ENCODE measurements at regions of chr10 and their contacts with region 1.

Region 1: GRCh38 chr10:102132563-102133372 is at the start of gene PPRC1:
- DNase-seq: peak; percentile 93 to 99 (median 95)
- ATAC-seq: peak; percentile 94
- H3K4me3 ChIP-seq: peak within 1 kb of the TSS; percentile 98
- H3K4me3 Mint-ChIP-seq: peak within 1 kb of the TSS; percentile 98
- H3K27ac ChIP-seq: peak within 1 kb of the TSS; percentile 81 to 82
- H3K27ac Mint-ChIP-seq: peak within 1 kb of the TSS; percentile 87
- H3K4me1 ChIP-seq: peaks cover 40% of the 10 kb centered on the region
- H3K4me1 Mint-ChIP-seq: peaks cover 39% of the 10 kb centered on the region
- H3K27me3 ChIP-seq: no peaks in the 10 kb centered on the region
- H3K27me3 Mint-ChIP-seq: no peaks in the 10 kb centered on the region
- CTCF ChIP-seq: peak; percentile 96
- total RNA-seq, gene PPRC1: 22.0 to 22.9 TPM

Region 2: GRCh38 chr10:101903827-101904550 is 228.8 kb before region 1 on chr10:
- CTCF ChIA-PET with region 1: no interaction called
- POLR2A ChIA-PET with region 1: no interaction called
- intact Hi-C with region 1: no loop called
- DNase-seq: peak in 2 of 14 experiments; percentile 15 to 23
- ATAC-seq: no peak
- H3K4me3 ChIP-seq: no peak overlapping the region
- H3K4me3 Mint-ChIP-seq: no peak overlapping the region
- H3K27ac ChIP-seq: no peak overlapping the region
- H3K27ac Mint-ChIP-seq: peak overlapping the region; percentile 10
- H3K4me1 ChIP-seq: no peaks in the 10 kb centered on the region
- H3K4me1 Mint-ChIP-seq: peaks cover 19% of the 10 kb centered on the region
- H3K27me3 ChIP-seq: no peaks in the 10 kb centered on the region
- H3K27me3 Mint-ChIP-seq: no peaks in the 10 kb centered on the region
- CTCF ChIP-seq: no peak

Region 3: DNA sequence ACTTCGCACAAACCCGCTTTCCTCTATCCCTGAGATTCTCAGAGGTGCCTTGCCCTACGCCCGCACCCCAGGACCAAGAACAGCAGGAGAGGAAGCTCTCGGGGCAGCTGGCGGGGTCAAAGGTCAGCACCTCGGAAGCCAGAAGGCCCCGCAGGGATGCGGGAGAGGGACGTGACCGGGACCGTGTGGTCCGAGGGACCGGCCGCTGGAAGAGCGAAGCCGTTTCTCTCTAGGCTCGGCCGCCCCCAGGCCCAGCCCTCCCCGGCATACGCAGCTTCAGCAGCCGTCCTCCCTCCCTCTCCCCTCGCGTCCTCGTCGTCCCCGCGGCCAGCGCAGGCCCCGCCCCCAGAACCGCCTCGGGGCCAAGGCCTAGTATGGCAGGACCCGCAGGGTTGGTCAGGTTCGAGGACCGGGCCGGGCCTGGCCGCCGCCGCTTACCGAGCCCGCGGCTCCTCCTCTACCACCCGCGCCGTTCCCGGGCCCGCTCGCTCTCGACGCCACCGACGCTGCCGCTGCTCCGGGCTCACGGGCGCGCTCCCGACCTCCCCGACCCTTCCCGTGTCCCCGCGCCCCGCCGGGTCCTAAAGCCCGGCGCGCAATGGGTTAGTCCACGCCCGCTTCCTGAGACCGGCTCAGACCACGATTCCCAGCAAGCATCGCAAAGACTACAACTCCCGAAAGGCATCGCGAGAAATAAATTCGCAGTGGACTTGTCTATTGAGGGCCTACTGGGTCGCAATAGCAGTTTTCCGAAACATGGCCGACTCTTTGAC is 76.9 kb before region 1 on chr10 and contains the start of gene ARMH3:
- CTCF ChIA-PET with region 1: no interaction called
- POLR2A ChIA-PET with region 1: no interaction called
- intact Hi-C with region 1: loop called in 1 of 2 experiments (anchors 2 kb)
- DNase-seq: peak; percentile 75 to 96 (median 84)
- ATAC-seq: peak; percentile 93
- H3K4me3 ChIP-seq: peak within 1 kb of the TSS; percentile 84
- H3K4me3 Mint-ChIP-seq: peak within 1 kb of the TSS; percentile 96
- H3K27ac ChIP-seq: peak within 1 kb of the TSS; percentile 70 to 83
- H3K27ac Mint-ChIP-seq: peak within 1 kb of the TSS; percentile 87
- H3K4me1 ChIP-seq: peaks cover 48% of the 10 kb centered on the region
- H3K4me1 Mint-ChIP-seq: peaks cover 45% of the 10 kb centered on the region
- H3K27me3 ChIP-seq: no peaks in the 10 kb centered on the region
- H3K27me3 Mint-ChIP-seq: no peaks in the 10 kb centered on the region
- CTCF ChIP-seq: no peak
- total RNA-seq, gene ARMH3: 17.7 to 18.9 TPM

Region 4: GRCh38 chr10:102101152-102101551 is 31.6 kb before region 1 on chr10:
- CTCF ChIA-PET with region 1: no interaction called
- POLR2A ChIA-PET with region 1: no interaction called
- intact Hi-C with region 1: no loop called
- DNase-seq: no peak
- ATAC-seq: no peak
- H3K4me3 ChIP-seq: no peak overlapping the region
- H3K4me3 Mint-ChIP-seq: no peak overlapping the region
- H3K27ac ChIP-seq: no peak overlapping the region
- H3K27ac Mint-ChIP-seq: no peak overlapping the region
- H3K4me1 ChIP-seq: peaks cover 17% of the 10 kb centered on the region
- H3K4me1 Mint-ChIP-seq: peaks cover 14% of the 10 kb centered on the region
- H3K27me3 ChIP-seq: no peaks in the 10 kb centered on the region
- H3K27me3 Mint-ChIP-seq: no peaks in the 10 kb centered on the region
- CTCF ChIP-seq: no peak

Region 5: DNA sequence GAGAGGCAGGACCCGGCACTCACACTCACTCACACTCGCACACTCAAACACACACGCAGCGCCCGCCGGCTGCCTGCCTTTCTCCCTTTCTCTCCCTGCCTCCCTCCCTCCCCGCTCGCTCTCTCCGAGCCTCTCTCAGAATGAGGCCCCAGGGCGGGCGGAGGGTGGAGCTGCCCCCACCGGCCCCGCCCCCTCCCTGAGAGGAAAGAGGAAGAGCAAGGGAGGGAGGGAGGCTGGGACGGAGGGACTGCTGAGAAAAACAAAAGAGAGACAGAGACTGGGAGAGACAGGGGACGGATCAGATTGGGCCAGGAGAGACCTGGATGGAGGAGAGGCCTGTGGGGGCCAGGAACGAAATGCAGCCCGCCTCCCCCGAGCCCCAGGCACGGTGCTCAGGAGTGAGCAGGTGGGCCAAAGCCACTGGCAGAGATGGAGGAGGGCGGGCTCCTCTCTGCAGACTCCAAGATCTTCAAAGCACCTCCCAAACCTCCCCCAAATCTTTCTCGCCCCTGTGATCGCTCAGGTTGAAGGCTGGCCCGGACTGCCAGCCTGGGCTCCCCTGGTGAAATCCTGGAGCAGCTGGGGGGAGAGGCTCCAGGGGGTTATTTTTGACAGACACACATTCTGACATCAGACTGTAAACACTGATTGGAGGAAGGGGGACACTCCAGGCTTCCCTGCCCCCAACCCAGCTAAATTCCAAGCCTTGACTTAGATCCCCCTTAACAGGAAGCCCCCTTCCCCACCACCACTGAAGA is 17.7 kb before region 1 on chr10:
- CTCF ChIA-PET with region 1: interaction called, 6 read pairs
- POLR2A ChIA-PET with region 1: interaction called, 25 read pairs
- intact Hi-C with region 1: loop called (anchors 1 kb)
- DNase-seq: peak; percentile 65 to 90 (median 84)
- ATAC-seq: peak; percentile 60
- H3K4me3 ChIP-seq: peak overlapping the region; percentile 58
- H3K4me3 Mint-ChIP-seq: peak overlapping the region; percentile 89
- H3K27ac ChIP-seq: peak overlapping the region; percentile 76 to 96
- H3K27ac Mint-ChIP-seq: peak overlapping the region; percentile 89
- H3K4me1 ChIP-seq: peaks cover 77% of the 10 kb centered on the region
- H3K4me1 Mint-ChIP-seq: peaks cover 73% of the 10 kb centered on the region
- H3K27me3 ChIP-seq: no peaks in the 10 kb centered on the region
- H3K27me3 Mint-ChIP-seq: no peaks in the 10 kb centered on the region
- CTCF ChIP-seq: no peak

Region 6: DNA sequence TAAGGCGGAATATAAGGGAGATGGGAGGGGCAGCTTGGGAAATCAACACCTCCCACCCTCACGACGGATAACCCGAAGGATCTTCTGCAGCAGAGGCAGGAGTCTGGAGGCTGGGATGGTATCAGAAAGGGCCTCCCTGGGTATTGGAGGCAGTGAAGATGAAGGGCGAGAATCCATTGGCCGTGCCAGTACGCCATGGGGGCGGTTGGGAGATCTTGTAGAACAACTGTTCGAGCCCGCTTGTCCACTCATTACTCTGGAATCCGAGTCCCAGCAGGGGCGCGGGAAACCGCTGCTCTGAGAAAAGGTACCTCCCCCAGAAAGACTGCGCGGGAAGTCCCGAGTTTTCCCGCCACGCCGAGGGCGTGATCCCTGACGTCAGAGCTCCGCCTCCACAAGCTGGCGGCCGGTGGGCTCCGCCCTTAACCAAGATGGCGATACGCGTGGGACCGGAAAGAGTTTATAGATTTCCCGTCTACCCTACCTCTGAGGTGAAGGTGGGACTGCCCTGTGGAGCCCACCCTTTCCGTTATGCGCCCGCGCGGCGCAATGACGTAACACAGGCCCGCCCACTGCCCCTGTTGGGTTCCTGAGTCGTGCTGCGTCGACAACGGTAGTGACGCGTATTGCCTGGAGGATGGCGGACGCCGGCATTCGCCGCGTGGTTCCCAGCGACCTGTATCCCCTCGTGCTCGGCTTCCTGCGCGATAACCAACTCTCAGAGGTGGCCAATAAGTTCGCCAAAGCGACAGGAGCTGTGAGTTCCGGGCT is 19.2 kb after region 1 on chr10 and contains the start of gene NOLC1:
- CTCF ChIA-PET with region 1: interaction called, 8 read pairs
- POLR2A ChIA-PET with region 1: interaction called, 24 read pairs
- intact Hi-C with region 1: loop called (anchors 1 kb)
- DNase-seq: peak; percentile 98 to 100 (median 100)
- ATAC-seq: peak; percentile 93
- H3K4me3 ChIP-seq: peak within 1 kb of the TSS; percentile 80
- H3K4me3 Mint-ChIP-seq: peak within 1 kb of the TSS; percentile 91
- H3K27ac ChIP-seq: peak within 1 kb of the TSS; percentile 89 to 93
- H3K27ac Mint-ChIP-seq: peak within 1 kb of the TSS; percentile 90
- H3K4me1 ChIP-seq: peaks cover 42% of the 10 kb centered on the region
- H3K4me1 Mint-ChIP-seq: peaks cover 50% of the 10 kb centered on the region
- H3K27me3 ChIP-seq: no peaks in the 10 kb centered on the region
- H3K27me3 Mint-ChIP-seq: no peaks in the 10 kb centered on the region
- CTCF ChIP-seq: no peak
- total RNA-seq, gene NOLC1: 34.2 to 36.1 TPM

Region 7: GRCh38 chr10:102853944-102854694 is 721.4 kb after region 1 on chr10 and contains the start of gene BORCS7:
- CTCF ChIA-PET with region 1: no interaction called
- POLR2A ChIA-PET with region 1: no interaction called
- intact Hi-C with region 1: loop called in 1 of 2 experiments (anchors 5 kb)
- DNase-seq: peak; percentile 70 to 94 (median 78)
- ATAC-seq: peak; percentile 99
- H3K4me3 ChIP-seq: peak within 1 kb of the TSS; percentile 98
- H3K4me3 Mint-ChIP-seq: peak within 1 kb of the TSS; percentile 85
- H3K27ac ChIP-seq: peak within 1 kb of the TSS; percentile 87 to 97
- H3K27ac Mint-ChIP-seq: peak within 1 kb of the TSS; percentile 96
- H3K4me1 ChIP-seq: peaks cover 15% of the 10 kb centered on the region
- H3K4me1 Mint-ChIP-seq: peaks cover 16% of the 10 kb centered on the region
- H3K27me3 ChIP-seq: no peaks in the 10 kb centered on the region
- H3K27me3 Mint-ChIP-seq: no peaks in the 10 kb centered on the region
- CTCF ChIP-seq: no peak
- total RNA-seq, gene BORCS7: 10.6 to 11.6 TPM